ENCODE measurements at regions of chr22 and their contacts with region 1.

Region 1: GRCh38 chr22:21641789-21642583 is at the start of gene SDF2L1:
- DNase-seq: peak; percentile 99
- H3K4me3 ChIP-seq: peak within 1 kb of the TSS; percentile 57 to 81 (median 58)
- H3K27ac ChIP-seq: peak within 1 kb of the TSS; percentile 56
- H3K4me1 ChIP-seq: peaks cover 14% of the 10 kb centered on the region
- H3K27me3 ChIP-seq: no peaks in the 10 kb centered on the region
- CTCF ChIP-seq: peak in 1 of 2 donors; percentile 17
- POLR2A ChIP-seq: peak; percentile 83
- total RNA-seq, gene SDF2L1: 66.7 and 75.1 TPM in 2 replicates

Region 2: DNA sequence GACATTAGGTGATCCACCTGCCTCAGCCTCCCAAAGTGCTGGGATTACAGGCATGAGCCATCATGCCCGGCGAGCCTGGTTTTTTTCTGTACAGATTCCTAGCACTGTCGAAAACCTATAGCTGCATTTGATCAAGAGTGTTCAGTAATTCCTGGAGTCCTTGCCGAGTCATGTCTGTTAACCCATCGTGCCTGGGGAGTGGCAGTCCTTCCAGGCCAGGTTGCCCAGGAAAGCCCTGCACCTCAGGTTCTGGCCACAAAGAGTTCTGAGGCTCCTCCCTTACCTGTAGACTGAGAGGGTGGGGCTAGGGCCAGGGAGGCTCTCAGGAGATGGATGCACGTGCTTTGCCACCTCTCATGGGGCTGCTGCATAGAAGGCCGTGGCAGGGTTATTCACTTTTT is 29.1 kb before region 1 on chr22:
- CTCF ChIA-PET with region 1: interaction called, 11 read pairs
- POLR2A ChIA-PET with region 1: no interaction called
- dilution Hi-C with region 1: no loop called
- intact Hi-C with region 1: no loop called
- DNase-seq: no peak
- H3K4me3 ChIP-seq: no peak overlapping the region
- H3K27ac ChIP-seq: no peak overlapping the region
- H3K4me1 ChIP-seq: no peaks in the 10 kb centered on the region
- H3K27me3 ChIP-seq: no peaks in the 10 kb centered on the region
- CTCF ChIP-seq: no peak
- POLR2A ChIP-seq: no peak

Region 3: DNA sequence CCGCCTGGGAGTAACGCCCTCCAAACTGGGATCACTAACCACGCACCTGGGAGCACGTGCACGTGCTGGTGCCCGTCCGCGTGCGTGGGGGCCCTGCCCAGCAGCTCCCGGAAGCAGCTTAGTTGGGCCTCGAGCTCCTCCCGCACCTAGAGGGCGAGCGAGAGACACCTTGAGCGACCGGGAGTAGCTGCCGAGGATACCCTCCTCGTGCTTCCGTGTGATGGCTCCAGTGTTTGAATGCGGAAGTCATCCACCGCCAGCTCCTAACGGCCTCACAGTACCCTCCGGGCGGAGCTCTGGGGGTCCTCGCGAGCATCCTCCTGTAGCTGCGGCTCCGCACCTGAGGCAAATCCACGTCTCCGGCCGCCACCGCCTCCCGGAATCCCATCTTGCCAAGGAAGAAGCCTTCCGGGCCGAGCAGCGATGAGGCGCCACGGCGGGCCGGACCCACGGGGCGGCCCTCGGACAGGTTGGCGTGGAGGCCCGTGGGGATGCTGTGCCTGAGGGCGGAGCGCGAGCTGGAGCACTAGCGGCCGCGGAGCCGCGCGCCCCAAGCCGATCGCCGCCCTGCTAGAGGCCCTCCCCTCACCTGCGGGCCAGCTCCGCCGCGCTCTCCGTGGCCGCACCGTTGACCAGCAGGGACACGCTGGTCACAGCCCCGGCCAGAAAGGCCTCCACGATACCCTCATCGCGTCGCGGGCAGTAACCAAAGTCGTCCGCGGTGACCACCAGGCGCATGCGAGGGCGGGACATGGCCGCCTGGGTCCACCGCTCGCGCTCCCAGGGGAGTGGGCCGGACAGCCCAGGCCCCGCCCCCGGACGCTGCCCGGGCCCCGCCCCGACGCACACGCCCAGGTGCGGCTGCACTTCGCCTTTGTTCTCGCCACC is 12.5 kb before region 1 on chr22 and contains the start of gene YDJC:
- CTCF ChIA-PET with region 1: interaction called, 41 read pairs
- POLR2A ChIA-PET with region 1: interaction called, 4 read pairs
- dilution Hi-C with region 1: no loop called
- intact Hi-C with region 1: loop called (anchors 1 kb)
- DNase-seq: peak; percentile 92
- H3K4me3 ChIP-seq: peak within 1 kb of the TSS; percentile 49 to 94 (median 63)
- H3K27ac ChIP-seq: peak within 1 kb of the TSS; percentile 51
- H3K4me1 ChIP-seq: no peaks in the 10 kb centered on the region
- H3K27me3 ChIP-seq: no peaks in the 10 kb centered on the region
- CTCF ChIP-seq: peak; percentile 73 to 87
- POLR2A ChIP-seq: peak; percentile 69
- total RNA-seq, gene YDJC: 23.8 and 27.2 TPM in 2 replicates

Region 4: GRCh38 chr22:21652010-21652546 is 10.1 kb after region 1 on chr22:
- CTCF ChIA-PET with region 1: interaction called, 16 read pairs
- POLR2A ChIA-PET with region 1: no interaction called
- dilution Hi-C with region 1: no loop called
- intact Hi-C with region 1: no loop called
- DNase-seq: peak; percentile 92
- H3K4me3 ChIP-seq: peak overlapping the region; percentile 64 to 85 (median 66)
- H3K27ac ChIP-seq: peak overlapping the region; percentile 61
- H3K4me1 ChIP-seq: peaks cover 17% of the 10 kb centered on the region
- H3K27me3 ChIP-seq: no peaks in the 10 kb centered on the region
- CTCF ChIP-seq: no peak
- POLR2A ChIP-seq: peak; percentile 66

Region 5: GRCh38 chr22:21707677-21708076 is 65.7 kb after region 1 on chr22:
- CTCF ChIA-PET with region 1: no interaction called
- POLR2A ChIA-PET with region 1: no interaction called
- dilution Hi-C with region 1: no loop called
- intact Hi-C with region 1: no loop called
- DNase-seq: no peak
- H3K4me3 ChIP-seq: no peak overlapping the region
- H3K27ac ChIP-seq: no peak overlapping the region
- H3K4me1 ChIP-seq: no peaks in the 10 kb centered on the region
- H3K27me3 ChIP-seq: no peaks in the 10 kb centered on the region
- CTCF ChIP-seq: no peak
- POLR2A ChIP-seq: no peak

Region 6: GRCh38 chr22:21726650-21727049 is 84.7 kb after region 1 on chr22:
- CTCF ChIA-PET with region 1: no interaction called
- POLR2A ChIA-PET with region 1: no interaction called
- dilution Hi-C with region 1: no loop called
- intact Hi-C with region 1: no loop called
- DNase-seq: no peak
- H3K4me3 ChIP-seq: no peak overlapping the region
- H3K27ac ChIP-seq: no peak overlapping the region
- H3K4me1 ChIP-seq: no peaks in the 10 kb centered on the region
- H3K27me3 ChIP-seq: no peaks in the 10 kb centered on the region
- CTCF ChIP-seq: peak; percentile 12 to 17
- POLR2A ChIP-seq: no peak

Region 7: GRCh38 chr22:21942407-21943343 is 300.7 kb after region 1 on chr22:
- CTCF ChIA-PET with region 1: no interaction called
- POLR2A ChIA-PET with region 1: no interaction called
- dilution Hi-C with region 1: no loop called
- intact Hi-C with region 1: no loop called
- DNase-seq: peak; percentile 97
- H3K4me3 ChIP-seq: no peak overlapping the region
- H3K27ac ChIP-seq: peak overlapping the region; percentile 86
- H3K4me1 ChIP-seq: peaks cover 83% of the 10 kb centered on the region
- H3K27me3 ChIP-seq: no peaks in the 10 kb centered on the region
- CTCF ChIP-seq: no peak
- POLR2A ChIP-seq: peak; percentile 70